Astrocyte of the cerebellum (primary cell): ENCODE measurements at regions of chr11 and their contacts with region 1.

Region 1: DNA sequence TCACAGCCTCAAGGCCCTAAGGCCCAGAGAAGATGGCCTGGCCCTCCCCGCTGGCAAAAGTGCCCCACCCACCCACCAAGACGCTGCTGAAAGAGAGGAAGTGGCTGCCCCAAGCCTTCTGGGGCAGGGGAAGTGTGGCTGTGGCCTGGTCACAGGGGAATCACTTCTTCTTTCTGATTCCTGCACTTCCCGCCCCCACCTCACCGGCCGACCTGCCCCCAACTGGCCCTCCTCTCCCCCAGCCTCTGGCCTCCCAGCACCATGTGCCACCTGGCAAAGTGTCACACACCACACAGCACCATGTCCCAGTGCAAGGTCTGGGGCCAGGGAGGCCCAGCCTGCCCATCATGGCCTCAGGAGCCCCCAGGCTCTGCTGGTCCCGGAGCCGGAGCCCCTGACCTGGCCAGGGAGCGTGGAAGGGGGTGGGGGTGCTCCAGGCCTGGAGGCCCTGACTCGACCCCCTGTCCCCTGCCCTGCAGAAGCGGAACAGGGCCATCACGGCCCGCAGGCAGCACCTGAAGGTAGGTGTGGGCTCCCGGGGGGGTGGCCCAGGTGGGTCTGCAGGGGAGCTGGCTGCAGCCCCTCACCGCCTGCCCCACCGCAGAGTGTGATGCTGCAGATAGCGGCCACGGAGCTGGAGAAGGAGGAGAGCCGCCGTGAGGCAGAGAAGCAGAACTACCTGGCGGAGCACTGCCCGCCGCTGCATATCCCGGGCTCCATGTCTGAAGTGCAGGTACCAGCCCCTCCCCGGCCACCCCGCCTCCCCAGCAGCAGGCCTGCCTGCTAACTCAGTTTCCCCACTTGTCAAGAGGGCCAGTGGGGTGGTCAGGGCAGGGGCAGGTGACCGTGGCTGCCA is 1.4 kb downstream of the TNNI2 start:
- DNase-seq: no peak
- H3K4me3 ChIP-seq: no peak overlapping the region
- CTCF ChIP-seq: no peak

Region 2: DNA sequence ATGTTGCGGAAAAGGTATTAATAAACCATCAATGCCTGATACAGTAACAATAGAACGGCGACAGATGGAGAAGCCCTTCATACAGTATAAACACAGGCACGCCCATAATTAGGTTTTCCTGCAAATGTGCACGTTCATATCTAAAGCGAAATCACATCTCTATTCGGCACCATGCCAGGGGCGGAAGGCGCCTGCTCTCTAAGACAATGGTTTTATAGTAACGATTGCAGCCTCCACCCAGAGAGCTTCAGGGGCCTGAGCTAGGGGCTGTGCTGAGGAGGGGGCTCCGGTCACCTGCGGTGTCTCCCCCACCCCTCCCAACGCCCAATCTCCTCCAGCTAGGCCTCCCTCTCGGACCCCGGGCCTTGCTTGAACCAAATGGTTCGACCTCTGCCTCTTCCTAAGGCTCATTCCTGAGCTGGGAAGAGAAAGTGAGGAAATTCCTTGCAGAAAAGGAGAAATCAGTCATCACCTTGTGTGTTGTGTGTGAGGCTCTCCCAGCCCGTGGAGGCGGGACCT is 201.0 kb before region 1 on chr11:
- in situ Hi-C with region 1: loop called (anchors 10 kb)
- DNase-seq: no peak
- H3K4me3 ChIP-seq: no peak overlapping the region
- CTCF ChIP-seq: no peak

Region 3: DNA sequence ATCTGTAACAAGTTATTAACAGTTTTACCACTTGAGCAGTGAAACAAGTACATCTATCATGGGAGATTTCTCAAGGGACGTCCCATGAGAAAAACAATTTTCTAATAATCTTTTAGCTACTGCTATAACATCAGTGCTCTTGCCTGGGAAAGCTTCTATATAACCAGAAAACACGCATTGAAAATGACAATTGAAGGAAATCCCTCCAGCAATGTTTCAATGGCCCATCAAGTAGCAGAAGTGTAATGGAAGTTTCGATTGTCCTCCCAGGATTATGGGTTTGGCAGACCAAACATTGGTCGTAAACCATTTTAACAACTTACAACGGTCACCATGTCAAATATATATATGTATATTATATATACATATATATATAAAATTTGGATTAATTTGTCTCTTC is 59.5 kb after region 1 on chr11:
- in situ Hi-C with region 1: loop called (anchors 5 kb)
- DNase-seq: no peak
- H3K4me3 ChIP-seq: no peak overlapping the region
- CTCF ChIP-seq: no peak